ENCODE measurements at regions of chr14 and their contacts with region 1.

Region 1: GRCh38 chr14:54347997-54348611 is 48.7 kb upstream of the CDKN3 start:
- H3K4me3 ChIP-seq: no peak overlapping the region
- H3K27ac ChIP-seq: no peak overlapping the region
- H3K4me1 ChIP-seq: peaks cover 16% of the 10 kb centered on the region
- CTCF ChIP-seq: no peak; the same call in 1 of the 2 replicates

Region 2: GRCh38 chr14:53295985-53296582 is 1052.0 kb before region 1 on chr14:
- CTCF ChIA-PET with region 1: interaction called, 20 read pairs
- POLR2A ChIA-PET with region 1: no interaction called
- H3K4me3 ChIP-seq: no peak overlapping the region
- H3K27ac ChIP-seq: no peak overlapping the region
- H3K4me1 ChIP-seq: no peaks in the 10 kb centered on the region
- CTCF ChIP-seq: no peak

Region 3: DNA sequence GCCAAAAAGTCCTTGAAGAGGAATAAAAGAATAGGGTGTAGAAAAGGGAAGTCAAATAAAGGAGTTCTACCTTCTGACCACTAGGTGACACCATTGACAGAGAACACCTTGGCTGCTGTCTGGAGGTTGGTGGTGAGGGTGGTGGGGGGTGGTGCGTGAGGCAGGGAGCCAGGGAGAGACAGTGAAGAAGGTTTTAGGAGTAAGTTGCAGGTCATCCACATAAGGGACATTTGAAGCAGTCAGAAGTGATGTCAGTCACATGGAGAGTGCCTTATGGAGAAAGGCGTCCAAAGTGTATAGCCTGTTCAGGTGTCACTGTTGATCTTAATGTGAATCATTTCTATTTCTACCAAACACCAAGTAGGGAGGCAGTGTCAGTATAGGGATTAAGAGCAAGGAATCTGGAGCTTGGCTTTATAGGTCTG is 915.7 kb before region 1 on chr14:
- CTCF ChIA-PET with region 1: interaction called, 10 read pairs
- POLR2A ChIA-PET with region 1: no interaction called
- H3K4me3 ChIP-seq: no peak overlapping the region
- H3K27ac ChIP-seq: no peak overlapping the region
- H3K4me1 ChIP-seq: no peaks in the 10 kb centered on the region
- CTCF ChIP-seq: peak; percentile 66

Region 4: DNA sequence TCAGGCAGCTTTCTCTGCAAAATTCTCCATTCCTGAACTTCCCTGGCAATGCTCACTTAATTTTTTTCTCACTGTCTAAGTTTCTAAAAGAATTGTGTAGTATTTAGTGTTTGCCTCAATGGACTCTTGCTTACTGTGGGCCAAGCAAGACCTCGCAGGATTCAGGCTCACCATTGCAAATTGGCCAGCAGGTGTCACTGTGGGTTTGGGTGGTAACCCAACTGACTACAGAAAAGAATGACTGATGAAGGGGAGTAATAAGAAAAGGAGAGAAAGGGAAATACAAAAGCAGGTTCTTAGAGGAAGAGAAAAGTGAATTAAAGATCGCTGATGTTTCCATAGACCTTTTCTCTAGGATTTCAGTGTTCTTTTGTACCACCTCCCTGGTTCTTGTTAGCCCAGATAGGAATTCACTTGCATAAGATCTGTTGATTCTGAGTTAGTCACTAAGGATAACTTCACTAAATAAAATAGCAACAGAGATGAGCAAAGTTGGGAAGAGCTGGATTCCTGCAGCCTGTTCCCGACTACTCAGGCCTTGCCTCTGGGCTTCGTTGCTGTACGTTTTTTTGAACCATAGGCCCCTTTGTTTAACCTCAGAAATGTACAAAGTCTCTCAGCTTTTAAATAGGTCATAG is 808.5 kb before region 1 on chr14:
- CTCF ChIA-PET with region 1: interaction called, 36 read pairs
- POLR2A ChIA-PET with region 1: no interaction called
- H3K4me3 ChIP-seq: no peak overlapping the region
- H3K27ac ChIP-seq: no peak overlapping the region
- H3K4me1 ChIP-seq: no peaks in the 10 kb centered on the region; the same call in 1 of the 2 replicates
- CTCF ChIP-seq: peak; percentile 34; the same call in 1 of the 2 replicates

Region 5: DNA sequence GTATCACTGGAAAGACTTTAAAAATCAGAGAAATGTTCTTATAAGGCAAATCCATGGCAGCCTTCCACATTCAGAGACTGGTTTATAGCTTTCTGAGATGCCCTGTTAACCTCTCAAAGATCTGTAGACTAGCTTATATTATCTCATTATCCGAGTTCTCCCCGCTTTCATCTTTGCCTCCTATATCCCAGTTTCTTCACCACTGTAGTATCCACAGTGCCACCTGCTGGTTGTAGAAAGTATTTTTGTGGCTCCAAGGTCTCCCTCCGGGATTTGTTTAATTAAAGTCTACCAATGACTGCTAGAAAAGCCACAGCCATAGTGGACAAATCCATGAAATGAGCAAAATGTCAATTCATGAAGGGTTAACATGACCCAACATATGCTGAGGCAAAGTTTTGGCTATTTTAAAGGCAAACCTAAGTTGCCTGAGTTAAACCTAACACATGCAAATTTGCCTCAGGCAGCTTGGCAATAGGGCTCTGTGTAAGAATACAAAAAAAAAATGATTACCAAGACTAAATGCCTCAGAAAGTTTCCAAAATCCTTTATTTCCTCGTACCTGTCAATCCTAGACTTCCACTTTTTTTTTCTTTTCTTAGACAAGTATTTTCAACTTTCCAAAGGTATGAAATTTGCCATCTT is 172.7 kb before region 1 on chr14:
- CTCF ChIA-PET with region 1: interaction called, 11 read pairs
- POLR2A ChIA-PET with region 1: no interaction called
- H3K4me3 ChIP-seq: no peak overlapping the region
- H3K27ac ChIP-seq: no peak overlapping the region
- H3K4me1 ChIP-seq: peaks cover 18% of the 10 kb centered on the region
- CTCF ChIP-seq: 0 out of 2 replicates have a peak, but pooled peaks have one; percentile 38

Region 6: DNA sequence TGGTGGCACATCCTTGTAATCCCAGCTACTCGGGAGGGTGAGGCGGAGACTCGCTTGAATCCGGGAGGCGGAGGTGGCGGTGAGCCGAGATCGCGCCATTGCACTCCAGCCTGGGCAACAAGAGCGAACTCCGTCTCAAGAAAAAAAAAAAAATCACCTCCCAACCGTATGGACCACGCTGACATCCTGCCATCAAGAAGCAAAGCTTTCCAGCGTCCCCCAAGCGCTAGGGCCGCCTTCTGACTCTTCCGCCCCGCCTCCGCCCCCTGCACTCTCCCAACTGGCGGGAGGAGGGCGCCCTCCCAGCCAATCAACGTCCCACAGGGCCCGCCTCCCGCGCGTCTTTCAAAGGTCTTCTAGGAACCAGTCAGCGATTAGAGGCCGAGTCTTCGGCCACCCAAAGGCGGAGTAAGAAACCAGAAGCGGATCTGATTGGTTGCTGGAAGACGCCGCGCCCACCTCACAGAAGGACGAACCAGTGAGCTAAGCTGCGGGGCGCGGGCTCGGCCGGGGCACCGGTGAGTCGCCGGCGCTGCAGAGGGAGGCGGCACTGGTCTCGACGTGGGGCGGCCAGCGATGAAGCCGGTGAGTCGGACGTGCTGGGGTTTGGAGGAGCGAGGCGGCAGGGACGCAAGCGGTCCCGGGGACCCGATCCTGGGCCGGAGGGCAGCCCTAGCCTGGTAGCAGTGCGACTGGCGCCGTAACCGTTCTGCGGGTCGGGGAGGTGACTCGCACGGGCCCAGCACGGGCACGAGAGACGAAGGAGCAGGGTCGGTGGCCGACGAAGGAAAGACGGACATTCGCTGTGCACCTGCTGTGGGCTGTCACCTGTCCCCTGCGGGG is 48.6 kb after region 1 on chr14 and contains the start of gene CDKN3:
- CTCF ChIA-PET with region 1: no interaction called
- POLR2A ChIA-PET with region 1: interaction called, 14 read pairs
- H3K4me3 ChIP-seq: peak within 1 kb of the TSS; percentile 88
- H3K27ac ChIP-seq: peak within 1 kb of the TSS; percentile 76; the same call in 1 of the 2 replicates
- H3K4me1 ChIP-seq: peaks cover 5% of the 10 kb centered on the region; the same call in 1 of the 2 replicates
- CTCF ChIP-seq: peak; percentile 74